Right ventricle myocardium inferior (tissue), 1 donor: ENCODE measurements at regions of chr10 and their contacts with region 1.

Region 1: DNA sequence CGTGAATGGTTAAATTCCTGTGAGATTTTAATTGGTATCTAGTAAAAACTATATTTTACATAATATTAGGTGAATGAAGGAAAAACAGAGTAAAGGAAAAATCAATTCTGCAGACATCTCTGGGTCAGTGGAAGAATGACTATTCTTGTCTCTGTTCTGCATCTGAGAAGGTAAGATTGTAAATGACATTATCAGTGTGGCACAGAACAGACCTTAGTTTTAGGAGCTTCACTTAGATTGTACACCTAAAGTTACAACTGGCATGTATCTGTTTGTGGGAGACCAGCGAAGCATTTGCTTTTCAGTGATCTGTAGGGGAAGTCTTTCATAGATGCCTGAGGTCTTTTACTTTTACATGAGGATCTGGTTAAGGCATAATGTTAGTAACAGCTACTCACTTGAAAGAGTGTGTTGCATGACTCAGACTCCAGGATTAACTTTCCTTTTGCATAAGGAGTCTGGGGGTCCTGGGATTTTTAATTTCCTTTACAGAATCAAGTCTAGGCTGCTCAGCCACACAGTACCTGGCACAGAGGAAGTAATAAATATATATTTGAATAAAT is 56.2 kb downstream of the JMJD1C start:
- DNase-seq: no peak
- ATAC-seq: no peak

Region 2: DNA sequence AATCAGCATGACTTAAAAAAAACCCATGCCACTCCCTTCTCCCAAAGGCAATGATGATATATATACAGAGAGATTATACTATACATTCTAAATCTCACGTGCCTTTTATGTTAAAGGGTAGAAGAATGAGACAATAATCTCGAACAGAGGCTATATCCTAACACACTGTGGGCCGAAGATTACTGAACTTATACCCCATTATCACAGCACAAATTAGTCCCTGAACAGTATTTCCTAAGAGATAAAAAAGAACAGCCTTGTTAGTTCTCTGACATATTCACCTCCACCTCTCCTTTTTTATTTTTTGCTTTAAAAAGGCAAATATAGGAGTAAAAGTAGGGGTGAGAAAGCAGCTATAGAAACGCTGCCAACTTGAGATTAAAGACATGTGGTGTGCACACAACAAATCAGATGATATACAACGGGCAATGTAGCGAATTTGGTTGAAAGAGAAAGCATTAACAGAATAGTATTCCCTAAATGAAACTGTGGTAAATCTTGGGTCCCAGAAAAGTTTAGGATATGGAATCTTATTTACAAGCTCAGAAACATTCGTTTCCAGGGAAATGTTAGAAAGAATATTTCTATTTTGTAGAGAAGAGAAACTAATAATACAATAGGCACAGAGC is 13.3 kb before region 1 on chr10:
- intact Hi-C with region 1: loop called (anchors 1 kb)
- DNase-seq: no peak
- ATAC-seq: no peak

Region 3: GRCh38 chr10:63430097-63430998 is 20.8 kb after region 1 on chr10:
- intact Hi-C with region 1: no loop called
- DNase-seq: no peak
- ATAC-seq: peak; percentile 67

Region 4: GRCh38 chr10:63465293-63466143 is 56.0 kb after region 1 on chr10 and contains the start of gene JMJD1C:
- intact Hi-C with region 1: no loop called
- DNase-seq: peak; percentile 91
- ATAC-seq: peak; percentile 93
- total RNA-seq, gene JMJD1C: 38.1 TPM

Region 5: DNA sequence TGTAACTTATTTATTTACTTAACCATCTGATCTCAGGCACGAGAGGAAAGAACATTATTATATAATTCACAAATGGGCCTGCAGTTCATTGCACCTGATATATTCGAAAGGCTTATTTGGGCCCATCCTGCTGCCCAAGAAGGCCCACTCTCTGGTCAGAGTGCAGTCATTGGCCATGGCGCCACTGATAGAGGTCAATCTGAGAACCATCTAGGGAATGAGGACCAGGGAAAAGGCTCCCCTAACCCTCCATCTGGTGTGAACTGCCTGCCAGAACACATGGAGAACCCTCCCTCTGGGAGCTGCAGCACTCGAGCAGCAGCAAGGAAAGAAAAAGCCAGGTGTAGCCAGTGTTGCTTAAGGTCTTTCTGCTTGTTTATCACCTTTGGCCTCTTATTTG is 248.2 kb after region 1 on chr10:
- intact Hi-C with region 1: no loop called
- DNase-seq: no peak
- ATAC-seq: no peak